Dendritic cell treated with granulocyte-macrophage colony-stimulating factor and Interleukin-4, amounts not matched to agents 40 ng/mL and 50 ng/mL, for 4 days (primary cell): ENCODE measurements at regions of chr4 and their contacts with region 1.

Region 1: DNA sequence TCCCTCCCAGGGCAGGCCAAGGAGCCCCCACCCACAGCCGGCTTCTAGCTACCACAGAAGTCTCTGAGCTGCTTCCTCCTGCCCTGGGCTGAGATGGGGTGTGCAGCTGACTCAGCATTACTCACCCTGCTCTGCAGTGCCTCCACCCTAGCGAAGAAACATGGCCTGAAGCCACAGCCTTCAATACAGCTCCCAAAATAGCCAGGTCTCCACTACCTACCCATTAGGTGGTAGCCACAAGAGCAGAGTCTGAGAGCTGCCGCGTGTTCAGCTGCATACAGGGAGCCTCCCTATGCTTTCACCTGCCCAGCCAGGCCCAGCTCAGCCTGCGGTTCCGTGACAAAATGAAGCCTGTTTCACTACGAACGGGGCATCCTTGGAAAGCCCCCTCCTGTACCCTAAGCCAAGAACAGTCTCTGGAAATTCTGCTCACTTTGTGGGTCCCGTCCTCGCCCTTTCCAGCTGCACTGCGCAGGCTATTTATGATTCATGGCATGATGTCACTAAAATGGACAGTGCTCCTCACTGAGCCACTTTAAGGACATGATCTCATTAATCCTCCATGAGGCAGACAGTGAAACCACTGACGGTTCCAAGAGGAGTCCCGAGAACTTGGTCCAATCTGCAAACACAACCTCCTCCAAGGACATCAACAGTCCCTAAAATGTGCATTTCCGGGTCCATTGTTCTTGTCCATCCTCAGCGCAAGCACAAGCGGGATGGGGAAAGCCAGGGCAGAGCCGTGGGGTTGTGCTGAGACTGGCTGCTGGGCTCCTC is 20.2 kb downstream of the WDR1 start:
- H3K4me3 Mint-ChIP-seq: peak overlapping the region; percentile 6
- H3K27ac Mint-ChIP-seq: peak overlapping the region; percentile 93
- H3K4me1 Mint-ChIP-seq: peaks cover 98% of the 10 kb centered on the region
- H3K27me3 Mint-ChIP-seq: no peaks in the 10 kb centered on the region

Region 2: GRCh38 chr4:9919047-9919446 is 177.3 kb before region 1 on chr4:
- intact Hi-C with region 1: no loop called
- H3K4me3 Mint-ChIP-seq: no peak overlapping the region
- H3K27ac Mint-ChIP-seq: no peak overlapping the region
- H3K4me1 Mint-ChIP-seq: peaks cover 1% of the 10 kb centered on the region
- H3K27me3 Mint-ChIP-seq: no peaks in the 10 kb centered on the region

Region 3: GRCh38 chr4:10116580-10117358 is 20.4 kb after region 1 on chr4 and contains the start of gene WDR1:
- intact Hi-C with region 1: loop called (anchors 1 kb)
- H3K4me3 Mint-ChIP-seq: peak within 1 kb of the TSS; percentile 95
- H3K27ac Mint-ChIP-seq: peak within 1 kb of the TSS; percentile 99
- H3K4me1 Mint-ChIP-seq: peaks cover 70% of the 10 kb centered on the region
- H3K27me3 Mint-ChIP-seq: peaks cover 14% of the 10 kb centered on the region